ENCODE measurements at regions of chr20 and their contacts with region 1.

Region 1: DNA sequence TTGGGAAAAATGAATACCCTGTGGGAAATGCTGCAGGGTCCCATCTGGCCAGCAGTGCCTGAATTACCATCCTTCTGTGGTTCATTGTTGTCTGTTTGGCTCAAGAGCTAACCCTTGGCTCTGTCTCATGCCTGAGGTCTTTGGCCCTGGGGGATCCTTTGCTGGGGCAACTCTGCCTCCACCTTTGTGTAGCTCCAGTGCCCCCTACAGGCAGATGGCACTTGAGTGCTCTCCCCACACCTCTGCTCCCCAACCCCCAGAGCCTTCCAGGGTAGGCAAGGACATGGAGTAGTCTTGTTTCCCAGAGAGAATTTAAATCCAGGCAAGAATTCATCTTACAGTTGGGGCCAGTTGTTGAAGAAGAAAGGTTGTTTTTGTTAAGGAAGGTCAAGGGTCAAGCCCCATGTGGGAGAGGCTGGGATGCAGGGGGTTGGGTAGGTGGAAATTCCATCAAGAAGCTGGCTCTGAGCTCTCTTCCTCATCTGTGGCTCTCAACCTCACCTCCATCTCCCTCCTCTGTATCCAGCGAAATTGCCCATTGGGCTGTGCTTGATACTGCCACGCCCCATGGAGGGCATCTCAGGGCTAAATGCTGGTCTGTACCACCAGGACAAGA is 44.2 kb downstream of the ZNF831 start:
- DNase-seq: peak; percentile 59
- ATAC-seq: peak; percentile 100
- H3K4me3 Mint-ChIP-seq: no peak overlapping the region
- H3K27ac Mint-ChIP-seq: peak overlapping the region; percentile 30
- H3K4me1 Mint-ChIP-seq: peaks cover 6% of the 10 kb centered on the region
- H3K27me3 Mint-ChIP-seq: no peaks in the 10 kb centered on the region
- CTCF ChIP-seq: no peak

Region 2: GRCh38 chr20:59094576-59094975 is 113.3 kb before region 1 on chr20:
- CTCF ChIA-PET with region 1: interaction called, 258 read pairs
- POLR2A ChIA-PET with region 1: no interaction called
- intact Hi-C with region 1: no loop called
- DNase-seq: no peak
- ATAC-seq: no peak
- H3K4me3 Mint-ChIP-seq: no peak overlapping the region
- H3K27ac Mint-ChIP-seq: no peak overlapping the region
- H3K4me1 Mint-ChIP-seq: no peaks in the 10 kb centered on the region
- H3K27me3 Mint-ChIP-seq: peaks cover 1% of the 10 kb centered on the region
- CTCF ChIP-seq: no peak

Region 3: GRCh38 chr20:59269411-59270025 is 61.7 kb after region 1 on chr20:
- CTCF ChIA-PET with region 1: no interaction called
- POLR2A ChIA-PET with region 1: no interaction called
- intact Hi-C with region 1: no loop called
- DNase-seq: no peak
- ATAC-seq: no peak
- H3K4me3 Mint-ChIP-seq: no peak overlapping the region
- H3K27ac Mint-ChIP-seq: no peak overlapping the region
- H3K4me1 Mint-ChIP-seq: no peaks in the 10 kb centered on the region
- H3K27me3 Mint-ChIP-seq: peaks cover 39% of the 10 kb centered on the region
- CTCF ChIP-seq: no peak

Measured in activated B cell treated with CpG ODN at 0.5 μM for 24 hours (primary cell).